ENCODE measurements at regions of chr7 and their contacts with region 1.

Region 1: DNA sequence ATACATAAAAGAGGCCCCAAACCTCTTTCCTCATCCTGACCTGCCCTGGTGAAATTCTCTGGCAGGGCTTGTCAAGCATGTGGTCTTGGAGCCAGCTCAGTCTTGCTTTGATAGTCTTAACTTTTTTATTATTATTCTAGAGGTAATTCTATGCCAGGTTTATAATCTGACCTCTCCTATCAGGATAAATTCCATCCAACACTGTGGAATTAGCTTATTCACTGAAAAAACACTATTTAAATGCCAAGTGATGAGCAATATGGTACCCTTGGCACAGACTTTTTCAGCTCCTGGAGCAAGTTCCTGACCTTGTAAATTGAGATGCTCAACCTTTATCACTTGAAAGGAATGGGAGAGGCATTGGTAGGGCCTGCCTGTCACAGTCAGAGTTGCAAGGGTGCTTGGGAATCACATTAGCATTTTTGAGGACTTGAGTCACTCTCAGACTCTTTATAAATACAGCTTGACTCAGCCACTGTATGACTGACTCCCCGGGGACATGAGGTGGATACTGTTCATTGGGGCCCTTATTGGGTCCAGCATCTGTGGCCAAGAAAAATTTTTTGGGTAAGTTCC is at the start of gene CPA4:
- DNase-seq: peak; percentile 98
- H3K4me3 ChIP-seq: peak within 1 kb of the TSS in 1 of 3 experiments; percentile 30
- H3K27ac ChIP-seq: peak within 1 kb of the TSS; percentile 71
- H3K4me1 ChIP-seq: peaks cover 43% of the 10 kb centered on the region
- H3K27me3 ChIP-seq: no peaks in the 10 kb centered on the region
- CTCF ChIP-seq: no peak
- total RNA-seq, gene CPA4: 168 to 495 TPM

Region 2: GRCh38 chr7:129332284-129333035 is 960.3 kb before region 1 on chr7:
- CTCF ChIA-PET with region 1: no interaction called
- dilution Hi-C with region 1: no loop called
- in situ Hi-C with region 1: no loop called
- intact Hi-C with region 1: no loop called
- DNase-seq: peak; percentile 48
- H3K4me3 ChIP-seq: no peak overlapping the region
- H3K27ac ChIP-seq: peak overlapping the region; percentile 15
- H3K4me1 ChIP-seq: peaks cover 5% of the 10 kb centered on the region
- H3K27me3 ChIP-seq: no peaks in the 10 kb centered on the region
- CTCF ChIP-seq: no peak

Region 3: DNA sequence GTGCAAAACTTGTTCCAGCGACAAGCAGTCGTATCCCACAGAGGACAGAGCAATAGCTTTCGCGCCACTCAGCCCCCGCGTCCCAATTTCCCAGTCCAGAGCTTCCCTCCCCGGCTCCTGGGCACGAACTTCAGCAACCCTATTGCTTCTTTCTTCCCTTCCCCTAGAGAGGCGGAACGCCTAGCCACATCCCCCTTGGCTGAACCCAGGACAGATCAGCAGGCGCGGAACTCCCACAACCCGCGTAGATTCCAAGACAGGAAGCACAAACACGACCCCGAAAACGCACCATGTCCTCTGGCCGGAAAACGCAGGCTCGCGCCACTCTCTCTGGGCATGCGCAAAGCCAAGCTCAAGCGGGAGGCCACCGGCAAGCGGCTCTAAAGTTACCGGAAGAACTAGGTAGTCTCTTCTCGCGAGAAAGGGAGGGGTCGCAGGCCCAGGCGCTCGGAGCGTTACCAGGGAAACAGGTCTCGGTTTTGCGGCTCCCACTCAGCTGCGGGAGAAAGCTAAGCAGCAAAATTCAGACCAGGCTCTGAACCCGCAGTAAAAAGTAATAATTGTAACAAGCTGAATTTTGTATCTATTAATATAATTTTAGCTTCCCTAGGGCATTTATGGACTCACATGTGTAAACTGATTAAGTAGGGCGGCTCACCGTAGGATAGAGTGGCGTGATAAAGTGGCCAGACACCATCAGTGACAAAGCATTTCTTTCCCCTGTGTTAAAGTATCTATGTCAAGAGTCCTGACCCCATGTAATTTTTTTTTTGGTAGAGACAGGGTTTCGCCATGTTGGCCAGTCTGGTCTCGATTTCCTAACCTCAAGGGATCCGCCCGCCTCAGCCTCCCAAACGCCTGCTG is 87.5 kb before region 1 on chr7 and contains the start of gene TMEM209:
- CTCF ChIA-PET with region 1: no interaction called
- dilution Hi-C with region 1: no loop called
- in situ Hi-C with region 1: no loop called
- intact Hi-C with region 1: loop called (anchors 2 kb)
- DNase-seq: peak; percentile 93
- H3K4me3 ChIP-seq: peak within 1 kb of the TSS; percentile 91 to 94 (median 91)
- H3K27ac ChIP-seq: peak within 1 kb of the TSS; percentile 89
- H3K4me1 ChIP-seq: peaks cover 8% of the 10 kb centered on the region
- H3K27me3 ChIP-seq: no peaks in the 10 kb centered on the region
- CTCF ChIP-seq: no peak
- total RNA-seq, gene TMEM209: 23.6 to 24.3 TPM

Region 4: DNA sequence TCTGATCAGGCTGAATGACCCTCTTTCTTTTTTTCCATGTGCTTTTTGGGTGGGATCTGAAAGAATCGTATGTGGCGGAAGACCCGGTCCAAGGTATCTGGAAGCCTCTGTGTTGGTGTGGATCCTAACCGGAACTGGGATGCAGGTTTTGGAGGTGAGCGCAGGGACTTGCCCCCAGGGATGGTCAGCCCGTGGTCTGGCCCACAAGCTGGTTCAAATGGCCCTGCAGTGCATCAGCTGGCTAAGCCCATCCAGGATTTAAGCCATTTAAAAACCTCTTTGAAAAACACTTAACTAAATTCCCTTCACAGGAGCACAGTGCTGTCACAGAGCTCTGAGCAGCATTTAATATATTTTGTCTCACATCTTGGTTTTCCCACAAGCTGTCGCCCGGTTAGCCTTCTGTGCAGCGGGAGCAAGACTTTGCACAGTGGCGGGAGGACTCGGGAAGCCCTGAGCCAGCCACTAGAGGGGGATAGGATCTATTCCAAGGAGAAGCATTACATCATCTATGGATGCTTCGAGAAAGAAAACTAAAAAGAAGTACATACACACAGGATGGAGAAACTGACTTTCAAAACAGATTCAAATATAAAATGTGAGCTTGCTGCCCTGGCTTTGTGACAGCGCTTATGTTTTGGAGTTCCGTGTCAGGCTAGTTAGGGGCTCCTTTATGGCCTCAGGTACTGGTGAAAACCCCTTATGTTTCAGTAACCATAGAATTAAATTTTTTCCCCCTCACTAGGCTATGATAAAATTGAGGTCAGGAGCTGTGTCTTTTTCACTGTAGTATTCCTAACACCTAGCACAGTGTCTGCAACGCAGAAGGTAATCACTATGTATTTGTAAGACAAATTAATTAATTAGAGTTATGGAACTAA is 14.8 kb before region 1 on chr7:
- CTCF ChIA-PET with region 1: no interaction called
- dilution Hi-C with region 1: no loop called
- in situ Hi-C with region 1: no loop called
- intact Hi-C with region 1: loop called (anchors 1 kb)
- DNase-seq: no peak
- H3K4me3 ChIP-seq: no peak overlapping the region
- H3K27ac ChIP-seq: no peak overlapping the region
- H3K4me1 ChIP-seq: peaks cover 76% of the 10 kb centered on the region
- H3K27me3 ChIP-seq: no peaks in the 10 kb centered on the region
- CTCF ChIP-seq: peak in 1 of 2 donors; percentile 17

Region 5: DNA sequence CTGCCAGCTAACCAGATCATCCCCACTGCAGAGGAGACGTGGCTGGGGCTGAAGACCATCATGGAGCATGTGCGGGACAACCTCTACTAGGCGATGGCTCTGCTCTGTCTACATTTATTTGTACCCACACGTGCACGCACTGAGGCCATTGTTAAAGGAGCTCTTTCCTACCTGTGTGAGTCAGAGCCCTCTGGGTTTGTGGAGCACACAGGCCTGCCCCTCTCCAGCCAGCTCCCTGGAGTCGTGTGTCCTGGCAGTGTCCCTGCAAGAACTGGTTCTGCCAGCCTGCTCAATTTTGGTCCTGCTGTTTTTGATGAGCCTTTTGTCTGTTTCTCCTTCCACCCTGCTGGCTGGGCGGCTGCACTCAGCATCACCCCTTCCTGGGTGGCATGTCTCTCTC is 29.8 kb after region 1 on chr7:
- CTCF ChIA-PET with region 1: no interaction called
- dilution Hi-C with region 1: no loop called
- in situ Hi-C with region 1: no loop called
- intact Hi-C with region 1: no loop called
- DNase-seq: peak; percentile 21
- H3K4me3 ChIP-seq: no peak overlapping the region
- H3K27ac ChIP-seq: no peak overlapping the region
- H3K4me1 ChIP-seq: peaks cover 8% of the 10 kb centered on the region
- H3K27me3 ChIP-seq: no peaks in the 10 kb centered on the region
- CTCF ChIP-seq: no peak

Region 6: DNA sequence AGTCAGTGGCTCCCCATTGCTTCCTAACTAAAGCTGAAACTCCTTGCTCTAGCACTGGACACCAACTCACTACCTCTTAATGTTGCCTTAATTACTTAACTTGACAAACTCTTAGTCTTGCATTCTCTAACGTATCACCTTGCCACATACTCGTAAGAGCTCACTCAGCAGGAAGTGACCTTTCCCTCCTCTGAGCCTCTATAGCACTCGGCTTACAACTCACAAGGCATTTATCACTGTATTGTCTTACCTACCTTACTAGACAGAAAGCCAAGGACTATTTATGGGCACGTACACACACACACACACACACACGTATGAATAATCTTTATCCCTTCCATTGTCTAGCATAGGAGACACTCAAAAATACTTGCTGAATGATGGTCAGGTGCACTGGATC is 126.9 kb after region 1 on chr7:
- CTCF ChIA-PET with region 1: no interaction called
- dilution Hi-C with region 1: no loop called
- in situ Hi-C with region 1: no loop called
- intact Hi-C with region 1: loop called (anchors 5 kb)
- DNase-seq: peak; percentile 44
- H3K4me3 ChIP-seq: no peak overlapping the region
- H3K27ac ChIP-seq: no peak overlapping the region
- H3K4me1 ChIP-seq: peaks cover 27% of the 10 kb centered on the region
- H3K27me3 ChIP-seq: no peaks in the 10 kb centered on the region
- CTCF ChIP-seq: no peak

Region 7: GRCh38 chr7:130486114-130486958 is 193.6 kb after region 1 on chr7:
- CTCF ChIA-PET with region 1: no interaction called
- dilution Hi-C with region 1: no loop called
- in situ Hi-C with region 1: no loop called
- intact Hi-C with region 1: loop called (anchors 5 kb)
- DNase-seq: no peak
- H3K4me3 ChIP-seq: peak overlapping the region; percentile 15 to 50 (median 45)
- H3K27ac ChIP-seq: no peak overlapping the region
- H3K4me1 ChIP-seq: peaks cover 15% of the 10 kb centered on the region
- H3K27me3 ChIP-seq: no peaks in the 10 kb centered on the region
- CTCF ChIP-seq: peak; percentile 42 to 59

Region 8: GRCh38 chr7:130543487-130544010 is 250.8 kb after region 1 on chr7:
- CTCF ChIA-PET with region 1: no interaction called
- dilution Hi-C with region 1: no loop called
- in situ Hi-C with region 1: no loop called
- intact Hi-C with region 1: no loop called
- DNase-seq: no peak
- H3K4me3 ChIP-seq: no peak overlapping the region
- H3K27ac ChIP-seq: no peak overlapping the region
- H3K4me1 ChIP-seq: no peaks in the 10 kb centered on the region
- H3K27me3 ChIP-seq: no peaks in the 10 kb centered on the region
- CTCF ChIP-seq: no peak

Region 9: GRCh38 chr7:130845581-130846085 is 552.9 kb after region 1 on chr7:
- CTCF ChIA-PET with region 1: no interaction called
- dilution Hi-C with region 1: no loop called
- in situ Hi-C with region 1: no loop called
- intact Hi-C with region 1: no loop called
- DNase-seq: peak; percentile 90
- H3K4me3 ChIP-seq: peak overlapping the region; percentile 14 to 45 (median 44)
- H3K27ac ChIP-seq: peak overlapping the region; percentile 89
- H3K4me1 ChIP-seq: peaks cover 31% of the 10 kb centered on the region
- H3K27me3 ChIP-seq: no peaks in the 10 kb centered on the region
- CTCF ChIP-seq: no peak